SK-N-SH (cell line): ENCODE measurements at regions of chr19 and their contacts with region 1.

Region 1: GRCh38 chr19:1794424-1795172 is 17.5 kb downstream of the ATP8B3 start:
- DNase-seq: no peak
- H3K4me3 ChIP-seq: no peak overlapping the region
- H3K27ac ChIP-seq: no peak overlapping the region
- H3K4me1 ChIP-seq: peaks cover 0 to 8% of the 10 kb centered on the region in 2 experiments; a peak in 1 of 4 replicates
- H3K27me3 ChIP-seq: no peaks in the 10 kb centered on the region
- CTCF ChIP-seq: no peak
- EP300 ChIP-seq: no peak
- RAD21 ChIP-seq: no peak

Region 2: DNA sequence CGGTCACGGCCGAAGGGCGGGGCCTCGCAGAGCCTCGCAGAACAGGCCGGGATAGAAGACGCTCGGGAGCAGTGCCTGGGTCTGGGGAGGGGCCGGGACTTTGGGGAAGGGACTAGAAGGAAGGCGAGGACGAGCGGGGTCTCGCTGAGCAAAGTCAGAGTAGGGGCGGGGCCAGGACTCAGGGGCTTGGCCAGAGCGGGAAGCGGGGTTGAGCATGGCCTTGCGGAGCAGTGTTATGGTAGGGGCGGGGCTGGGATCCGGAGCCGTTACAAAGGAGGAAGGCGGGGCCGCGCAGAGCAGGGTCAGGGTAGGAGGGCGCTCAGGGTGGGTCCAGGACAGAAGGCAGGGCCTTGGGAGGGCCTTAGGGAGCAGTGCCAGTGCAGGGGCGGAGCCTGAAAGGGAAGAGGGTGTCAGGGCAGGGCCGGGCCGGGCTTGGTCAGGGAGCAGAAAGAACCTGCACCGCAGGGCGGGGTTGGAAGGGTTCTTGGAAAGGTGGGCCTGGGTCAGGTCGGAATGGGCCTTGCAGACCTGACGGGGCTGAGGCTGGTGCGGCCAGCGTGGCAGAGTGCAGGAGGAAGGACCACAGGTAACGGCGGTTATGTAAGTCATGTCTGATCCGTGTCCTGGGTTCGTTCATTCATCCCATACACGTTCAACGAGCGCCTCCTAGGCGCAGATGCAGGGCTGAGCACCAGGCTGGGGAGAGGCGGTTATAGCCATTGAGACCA is 18.0 kb after region 1 on chr19:
- CTCF ChIA-PET with region 1: interaction called, 20 read pairs
- POLR2A ChIA-PET with region 1: no interaction called
- DNase-seq: peak; percentile 96
- H3K4me3 ChIP-seq: peak overlapping the region; percentile 54 to 71
- H3K27ac ChIP-seq: peak overlapping the region; percentile 69 to 72
- H3K4me1 ChIP-seq: peaks cover 0 to 14% of the 10 kb centered on the region in 2 experiments; a peak in 1 of 4 replicates
- H3K27me3 ChIP-seq: no peaks in the 10 kb centered on the region
- CTCF ChIP-seq: peak; percentile 69
- EP300 ChIP-seq: no peak
- RAD21 ChIP-seq: peak; percentile 78